WTC11 (cell line): ENCODE measurements at regions of chr10 and their contacts with region 1.

Region 1: GRCh38 chr10:28663576-28664313 is 13.6 kb upstream of the BAMBI start:
- DNase-seq: peak; percentile 87
- ATAC-seq: peak; percentile 73
- H3K4me3 Mint-ChIP-seq: no peak overlapping the region
- H3K27ac Mint-ChIP-seq: no peak overlapping the region
- H3K4me1 Mint-ChIP-seq: peaks cover 15% of the 10 kb centered on the region
- H3K27me3 Mint-ChIP-seq: peaks cover 21% of the 10 kb centered on the region
- CTCF ChIP-seq: peak; percentile 94

Region 2: DNA sequence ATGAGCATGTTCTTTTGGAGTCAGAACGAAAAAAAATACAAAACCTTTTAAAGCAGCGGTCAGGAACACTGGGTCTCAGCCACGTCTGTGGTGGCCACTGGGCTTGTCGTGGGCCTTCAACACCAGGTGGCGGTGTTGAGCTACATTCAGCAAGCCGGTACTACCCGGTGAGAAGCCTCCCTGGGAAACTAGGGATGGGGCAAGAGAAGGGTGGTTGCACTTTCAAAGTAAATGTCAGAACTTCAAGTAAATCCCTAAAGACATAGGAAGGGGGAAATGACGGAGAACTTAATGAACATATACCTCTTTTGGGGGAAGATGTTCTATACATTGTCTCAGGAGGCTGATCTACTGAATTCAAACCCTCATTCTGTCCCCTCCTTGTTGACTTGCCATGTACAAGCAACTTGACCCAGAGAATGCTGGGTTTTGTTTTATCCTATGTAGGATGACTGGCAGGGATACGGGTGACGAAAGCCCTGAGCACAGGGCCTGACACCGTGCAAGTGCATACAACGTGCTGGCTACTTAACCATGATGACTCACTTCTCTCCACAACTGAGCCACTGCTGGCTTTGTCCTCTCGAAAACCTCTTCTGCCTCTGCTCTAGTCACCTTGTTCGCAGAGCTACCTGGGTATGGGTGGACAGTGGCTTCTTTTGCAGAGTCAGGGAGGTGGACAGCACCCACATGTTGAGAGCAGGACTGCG is 35.4 kb before region 1 on chr10:
- CTCF ChIA-PET with region 1: interaction called, 12 read pairs
- POLR2A ChIA-PET with region 1: no interaction called
- DNase-seq: peak; percentile 87
- ATAC-seq: peak; percentile 86
- H3K4me3 Mint-ChIP-seq: no peak overlapping the region
- H3K27ac Mint-ChIP-seq: no peak overlapping the region
- H3K4me1 Mint-ChIP-seq: 0 out of 2 replicates have a peak, but pooled peaks cover 2% of the 10 kb centered on the region
- H3K27me3 Mint-ChIP-seq: no peaks in the 10 kb centered on the region; the same call in 1 of the 2 replicates
- CTCF ChIP-seq: peak; percentile 86

Region 3: GRCh38 chr10:28875549-28876081 is 211.9 kb after region 1 on chr10:
- CTCF ChIA-PET with region 1: interaction called, 11 read pairs
- POLR2A ChIA-PET with region 1: no interaction called
- DNase-seq: peak; percentile 21
- ATAC-seq: peak; percentile 96
- H3K4me3 Mint-ChIP-seq: no peak overlapping the region
- H3K27ac Mint-ChIP-seq: peak overlapping the region; percentile 7; the same call in 1 of the 2 replicates
- H3K4me1 Mint-ChIP-seq: peaks cover 9% of the 10 kb centered on the region
- H3K27me3 Mint-ChIP-seq: no peaks in the 10 kb centered on the region
- CTCF ChIP-seq: no peak

Region 4: GRCh38 chr10:29304264-29305030 is 640.7 kb after region 1 on chr10:
- CTCF ChIA-PET with region 1: interaction called, 19 read pairs
- POLR2A ChIA-PET with region 1: interaction called, 3 read pairs
- DNase-seq: peak; percentile 65
- ATAC-seq: peak; percentile 79
- H3K4me3 Mint-ChIP-seq: no peak overlapping the region
- H3K27ac Mint-ChIP-seq: no peak overlapping the region
- H3K4me1 Mint-ChIP-seq: peaks cover 26% of the 10 kb centered on the region
- H3K27me3 Mint-ChIP-seq: no peaks in the 10 kb centered on the region
- CTCF ChIP-seq: peak; percentile 68